HepG2 (cell line): ENCODE measurements at regions of chr1 and their contacts with region 1.

Region 1: DNA sequence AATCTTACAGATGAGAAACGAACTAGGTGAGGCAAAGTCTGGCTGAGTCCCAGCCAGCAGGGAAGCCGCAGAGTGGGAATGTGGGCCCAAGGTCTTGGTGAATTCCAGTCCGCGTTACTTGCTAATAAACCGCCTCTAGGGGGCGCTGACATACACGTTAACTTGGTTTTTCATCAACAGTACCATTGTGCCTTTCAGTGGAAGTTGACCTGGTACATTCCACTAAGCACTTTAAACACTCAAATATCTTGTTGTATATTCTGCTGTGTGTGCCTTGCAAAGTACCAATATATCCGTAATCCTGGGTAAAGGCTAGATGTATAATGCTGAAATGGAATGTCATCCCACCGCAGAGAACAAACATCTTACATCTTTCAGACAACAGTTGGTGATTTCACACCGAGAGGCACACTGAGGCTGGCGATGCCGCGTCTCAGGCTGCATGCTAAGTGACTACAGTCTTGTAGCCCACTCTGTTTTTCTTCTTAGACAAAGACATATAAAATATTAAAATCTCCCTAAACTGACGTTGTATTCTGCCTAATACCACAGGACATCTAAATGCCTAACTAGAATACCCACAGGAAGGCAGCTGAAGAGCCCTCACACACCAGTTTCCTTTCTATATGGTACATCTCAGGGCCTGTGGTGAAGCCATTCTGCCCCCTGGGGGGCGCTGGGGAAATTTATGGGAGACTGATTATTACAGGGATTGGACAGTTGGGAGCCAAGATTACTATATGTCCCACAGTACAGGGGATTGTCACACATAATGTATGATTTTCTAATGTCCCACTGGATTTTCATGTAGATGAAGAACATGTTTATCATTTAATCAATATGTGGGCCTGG is 49.2 kb upstream of the C1orf198 start:
- DNase-seq: peak; percentile 80
- ATAC-seq: peak; percentile 90
- H3K4me3 ChIP-seq: no peak overlapping the region
- H3K27ac ChIP-seq: no peak overlapping the region
- H3K4me1 ChIP-seq: peaks cover 13% of the 10 kb centered on the region
- H3K27me3 ChIP-seq: no peaks in the 10 kb centered on the region
- CTCF ChIP-seq: peak; percentile 81
- EP300 ChIP-seq: no peak
- POLR2A ChIP-seq: no peak
- RAD21 ChIP-seq: peak; percentile 50; the same call in 1 of the 2 replicates

Region 2: GRCh38 chr1:231091831-231092301 is 174.4 kb after region 1 on chr1:
- CTCF ChIA-PET with region 1: interaction called, 5 read pairs
- POLR2A ChIA-PET with region 1: no interaction called
- in situ Hi-C with region 1: no loop called
- intact Hi-C with region 1: loop called (anchors 2 kb)
- DNase-seq: peak; percentile 40
- ATAC-seq: peak; percentile 90
- H3K4me3 ChIP-seq: no peak overlapping the region
- H3K27ac ChIP-seq: no peak overlapping the region
- H3K4me1 ChIP-seq: no peaks in the 10 kb centered on the region
- H3K27me3 ChIP-seq: no peaks in the 10 kb centered on the region; a peak in 1 of 5 replicates
- CTCF ChIP-seq: peak; percentile 86
- EP300 ChIP-seq: no peak
- POLR2A ChIP-seq: no peak
- RAD21 ChIP-seq: 0 out of 2 replicates have a peak, but pooled peaks have one; percentile 56